ENCODE measurements at regions of chr11 and their contacts with region 1.

Region 1: GRCh38 chr11:113875234-113876073 is at the start of gene USP28:
- DNase-seq: peak; percentile 99 to 100
- H3K4me3 ChIP-seq: peak within 1 kb of the TSS; percentile 66
- H3K4me3 Mint-ChIP-seq: peak within 1 kb of the TSS; percentile 86
- H3K27ac Mint-ChIP-seq: peak within 1 kb of the TSS; percentile 96
- H3K4me1 ChIP-seq: peaks cover 12% of the 10 kb centered on the region
- H3K4me1 Mint-ChIP-seq: peaks cover 45% of the 10 kb centered on the region
- H3K27me3 ChIP-seq: no peaks in the 10 kb centered on the region
- H3K27me3 Mint-ChIP-seq: no peaks in the 10 kb centered on the region
- CTCF ChIP-seq: peak in 1 of 2 experiments; percentile 23
- total RNA-seq, gene USP28: 63.8 and 74.4 TPM in 2 replicates

Region 2: DNA sequence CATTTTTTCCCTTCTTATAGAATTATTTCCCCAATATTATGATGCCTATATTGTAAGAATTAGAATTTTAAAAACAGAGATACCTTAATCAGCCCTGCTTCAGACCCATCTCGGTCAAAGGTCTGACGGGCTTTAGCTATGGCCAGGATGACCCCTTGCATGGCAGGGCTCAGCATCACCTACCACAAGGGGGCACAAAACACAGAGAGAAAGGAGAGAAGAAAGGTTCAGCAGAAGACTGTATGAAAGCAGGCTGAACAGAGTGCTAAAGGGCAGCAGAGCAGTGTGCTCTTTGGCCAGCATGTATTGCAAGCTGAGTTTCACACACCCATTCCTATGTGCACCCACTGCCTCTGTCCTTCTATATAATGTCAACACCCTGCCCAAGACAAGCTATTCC is 69.0 kb before region 1 on chr11:
- CTCF ChIA-PET with region 1: no interaction called
- POLR2A ChIA-PET with region 1: interaction called, 3 read pairs
- intact Hi-C with region 1: loop called (anchors 5 kb)
- DNase-seq: peak; percentile 77 to 82
- H3K4me3 ChIP-seq: no peak overlapping the region
- H3K4me3 Mint-ChIP-seq: no peak overlapping the region
- H3K27ac Mint-ChIP-seq: no peak overlapping the region
- H3K4me1 ChIP-seq: no peaks in the 10 kb centered on the region
- H3K4me1 Mint-ChIP-seq: no peaks in the 10 kb centered on the region
- H3K27me3 ChIP-seq: no peaks in the 10 kb centered on the region
- H3K27me3 Mint-ChIP-seq: no peaks in the 10 kb centered on the region
- CTCF ChIP-seq: peak; percentile 87 to 90

Region 3: GRCh38 chr11:113831314-113831713 is 44.1 kb before region 1 on chr11:
- CTCF ChIA-PET with region 1: no interaction called
- POLR2A ChIA-PET with region 1: no interaction called
- intact Hi-C with region 1: no loop called
- DNase-seq: no peak
- H3K4me3 ChIP-seq: no peak overlapping the region
- H3K4me3 Mint-ChIP-seq: no peak overlapping the region
- H3K27ac Mint-ChIP-seq: no peak overlapping the region
- H3K4me1 ChIP-seq: no peaks in the 10 kb centered on the region
- H3K4me1 Mint-ChIP-seq: peaks cover 7% of the 10 kb centered on the region
- H3K27me3 ChIP-seq: no peaks in the 10 kb centered on the region
- H3K27me3 Mint-ChIP-seq: no peaks in the 10 kb centered on the region
- CTCF ChIP-seq: no peak

Region 4: GRCh38 chr11:113847580-113847979 is 27.9 kb before region 1 on chr11:
- CTCF ChIA-PET with region 1: no interaction called
- POLR2A ChIA-PET with region 1: no interaction called
- intact Hi-C with region 1: no loop called
- DNase-seq: no peak
- H3K4me3 ChIP-seq: no peak overlapping the region
- H3K4me3 Mint-ChIP-seq: no peak overlapping the region
- H3K27ac Mint-ChIP-seq: no peak overlapping the region
- H3K4me1 ChIP-seq: no peaks in the 10 kb centered on the region
- H3K4me1 Mint-ChIP-seq: no peaks in the 10 kb centered on the region
- H3K27me3 ChIP-seq: no peaks in the 10 kb centered on the region
- H3K27me3 Mint-ChIP-seq: no peaks in the 10 kb centered on the region
- CTCF ChIP-seq: no peak

Region 5: DNA sequence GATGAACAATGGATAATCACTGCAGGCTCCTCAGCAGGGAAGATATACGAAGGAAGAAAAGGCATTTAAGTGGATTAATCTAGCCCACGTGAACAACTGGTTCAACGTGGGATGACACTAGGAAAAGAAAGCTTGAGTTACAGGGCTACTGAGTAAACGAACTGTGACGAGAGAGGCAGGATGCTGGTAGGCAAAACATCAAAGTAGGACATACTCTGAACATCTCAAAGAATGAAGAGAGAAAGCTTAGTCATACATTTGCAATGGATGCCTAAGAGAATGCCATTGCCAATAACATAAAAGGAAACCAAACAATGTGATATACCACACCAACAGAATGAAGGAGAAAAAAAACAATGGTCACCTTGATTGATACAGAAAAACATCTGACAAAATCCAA is 13.0 kb before region 1 on chr11:
- CTCF ChIA-PET with region 1: no interaction called
- POLR2A ChIA-PET with region 1: interaction called, 6 read pairs
- intact Hi-C with region 1: loop called (anchors 1 kb)
- DNase-seq: peak; percentile 35 to 37
- H3K4me3 ChIP-seq: no peak overlapping the region
- H3K4me3 Mint-ChIP-seq: no peak overlapping the region
- H3K27ac Mint-ChIP-seq: no peak overlapping the region
- H3K4me1 ChIP-seq: peaks cover 14% of the 10 kb centered on the region
- H3K4me1 Mint-ChIP-seq: peaks cover 19% of the 10 kb centered on the region
- H3K27me3 ChIP-seq: no peaks in the 10 kb centered on the region
- H3K27me3 Mint-ChIP-seq: no peaks in the 10 kb centered on the region
- CTCF ChIP-seq: no peak

Measured in Caco-2 (cell line).